ENCODE measurements at regions of chr4 and their contacts with region 1.

Region 1: GRCh38 chr4:145148980-145149379 is 31.4 kb downstream of the OTUD4 start:
- DNase-seq: no peak
- ATAC-seq: no peak

Region 2: GRCh38 chr4:144575181-144575580 is 573.8 kb before region 1 on chr4:
- intact Hi-C with region 1: no loop called
- DNase-seq: no peak
- ATAC-seq: peak in 1 of 2 donors; percentile 72

Region 3: GRCh38 chr4:145107126-145107525 is 41.9 kb before region 1 on chr4:
- intact Hi-C with region 1: loop called in 1 of 2 experiments (anchors 5 kb)
- DNase-seq: no peak
- ATAC-seq: no peak

Measured in left cardiac atrium (tissue), 4 donors.